Activated CD4-positive, alpha-beta memory T cell treated with anti-CD3 and anti-CD28 coated beads, Interleukin-2, amount 10 ng/mL, durations not matched to agents 7 days and 5 days (primary cell): ENCODE measurements at regions of chr3 and their contacts with region 1.

Region 1: DNA sequence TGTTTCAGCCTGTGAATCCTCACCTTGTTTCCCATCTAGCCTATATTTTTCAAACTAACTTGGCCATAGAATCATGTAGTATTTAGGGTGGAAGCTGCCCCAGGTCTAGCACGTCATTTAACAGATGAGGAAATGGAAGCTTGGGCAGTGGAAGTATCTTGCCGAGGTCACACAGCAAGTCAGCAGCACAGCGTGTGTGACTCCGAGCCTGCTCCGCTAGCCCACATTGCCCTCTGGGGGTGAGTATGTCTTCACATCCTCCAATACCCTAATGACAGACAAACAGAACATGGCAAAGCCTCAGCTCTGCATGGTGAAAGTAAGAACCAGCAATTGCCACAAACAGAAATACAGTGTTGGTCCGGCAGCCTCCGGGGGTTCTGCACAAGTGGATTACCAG is 2.2 kb upstream of the CCR5 start:
- DNase-seq: peak; percentile 86
- H3K4me3 Mint-ChIP-seq: peak overlapping the region; percentile 1
- H3K27ac Mint-ChIP-seq: peak overlapping the region; percentile 59
- H3K4me1 Mint-ChIP-seq: peaks cover 80% of the 10 kb centered on the region
- H3K27me3 Mint-ChIP-seq: peaks cover 10% of the 10 kb centered on the region

Region 2: DNA sequence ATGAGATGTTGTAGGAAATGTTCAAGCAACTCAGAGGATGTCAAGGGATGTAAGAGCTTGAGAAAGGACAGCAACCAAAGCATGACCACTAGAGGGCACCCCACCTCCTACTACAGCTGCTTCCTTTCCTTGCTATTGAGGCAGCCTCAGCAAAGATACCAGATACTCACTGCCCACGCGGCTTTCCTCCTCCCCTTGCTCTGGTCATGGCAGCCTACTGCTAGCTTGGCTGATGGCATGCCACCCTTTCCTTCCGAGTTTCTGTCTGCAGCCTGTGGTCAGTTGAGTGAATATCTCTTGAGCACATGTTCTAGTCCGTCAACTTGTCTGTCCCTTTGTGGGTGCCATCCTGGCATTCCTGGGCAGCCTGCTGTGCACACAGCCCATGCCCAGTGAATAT is 429.7 kb before region 1 on chr3:
- CTCF ChIA-PET with region 1: interaction called, 17 read pairs
- POLR2A ChIA-PET with region 1: interaction called, 46 read pairs
- DNase-seq: peak; percentile 89
- H3K4me3 Mint-ChIP-seq: no peak overlapping the region
- H3K27ac Mint-ChIP-seq: peak overlapping the region; percentile 2
- H3K4me1 Mint-ChIP-seq: peaks cover 52% of the 10 kb centered on the region
- H3K27me3 Mint-ChIP-seq: no peaks in the 10 kb centered on the region

Region 3: GRCh38 chr3:46013316-46014094 is 355.1 kb before region 1 on chr3:
- CTCF ChIA-PET with region 1: no interaction called
- POLR2A ChIA-PET with region 1: no interaction called
- DNase-seq: no peak
- H3K4me3 Mint-ChIP-seq: no peak overlapping the region
- H3K27ac Mint-ChIP-seq: no peak overlapping the region
- H3K4me1 Mint-ChIP-seq: peaks cover 21% of the 10 kb centered on the region
- H3K27me3 Mint-ChIP-seq: peaks cover 6% of the 10 kb centered on the region

Region 4: GRCh38 chr3:46078712-46079400 is 289.7 kb before region 1 on chr3:
- CTCF ChIA-PET with region 1: interaction called, 85 read pairs
- POLR2A ChIA-PET with region 1: interaction called, 8 read pairs
- DNase-seq: peak; percentile 91
- H3K4me3 Mint-ChIP-seq: no peak overlapping the region
- H3K27ac Mint-ChIP-seq: no peak overlapping the region
- H3K4me1 Mint-ChIP-seq: peaks cover 33% of the 10 kb centered on the region
- H3K27me3 Mint-ChIP-seq: peaks cover 27% of the 10 kb centered on the region

Region 5: DNA sequence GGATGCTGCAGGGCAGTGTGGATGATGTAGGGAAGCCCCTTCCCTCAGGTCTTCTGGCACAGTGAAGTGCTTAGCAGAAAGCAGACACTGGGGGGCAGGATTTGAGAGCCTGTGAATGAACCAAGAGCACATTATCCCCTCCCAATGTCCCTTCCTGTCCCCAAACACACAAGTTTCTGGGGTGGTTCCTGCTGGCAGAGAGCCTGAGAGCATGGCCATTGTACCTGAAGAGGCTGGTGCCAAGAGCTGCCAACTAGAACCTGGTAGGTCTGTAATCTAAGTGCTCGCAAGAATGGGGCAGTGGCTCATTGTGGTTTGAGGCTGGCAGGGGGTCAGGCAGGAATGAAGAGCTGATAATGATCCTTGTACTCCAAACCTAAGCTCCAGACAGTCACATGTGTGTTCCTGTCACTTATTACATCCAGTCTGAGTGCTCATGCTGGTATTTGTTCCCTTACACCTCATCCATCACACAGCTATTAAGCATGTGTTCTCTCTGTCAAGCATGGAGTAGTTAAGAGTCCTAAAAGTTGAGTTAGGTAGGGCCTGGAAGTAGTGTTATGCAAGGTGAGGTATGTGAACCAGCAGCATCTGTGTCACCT is 153.7 kb before region 1 on chr3:
- CTCF ChIA-PET with region 1: interaction called, 135 read pairs
- POLR2A ChIA-PET with region 1: interaction called, 101 read pairs
- DNase-seq: peak; percentile 43
- H3K4me3 Mint-ChIP-seq: no peak overlapping the region
- H3K27ac Mint-ChIP-seq: no peak overlapping the region
- H3K4me1 Mint-ChIP-seq: peaks cover 18% of the 10 kb centered on the region
- H3K27me3 Mint-ChIP-seq: peaks cover 20% of the 10 kb centered on the region

Region 6: DNA sequence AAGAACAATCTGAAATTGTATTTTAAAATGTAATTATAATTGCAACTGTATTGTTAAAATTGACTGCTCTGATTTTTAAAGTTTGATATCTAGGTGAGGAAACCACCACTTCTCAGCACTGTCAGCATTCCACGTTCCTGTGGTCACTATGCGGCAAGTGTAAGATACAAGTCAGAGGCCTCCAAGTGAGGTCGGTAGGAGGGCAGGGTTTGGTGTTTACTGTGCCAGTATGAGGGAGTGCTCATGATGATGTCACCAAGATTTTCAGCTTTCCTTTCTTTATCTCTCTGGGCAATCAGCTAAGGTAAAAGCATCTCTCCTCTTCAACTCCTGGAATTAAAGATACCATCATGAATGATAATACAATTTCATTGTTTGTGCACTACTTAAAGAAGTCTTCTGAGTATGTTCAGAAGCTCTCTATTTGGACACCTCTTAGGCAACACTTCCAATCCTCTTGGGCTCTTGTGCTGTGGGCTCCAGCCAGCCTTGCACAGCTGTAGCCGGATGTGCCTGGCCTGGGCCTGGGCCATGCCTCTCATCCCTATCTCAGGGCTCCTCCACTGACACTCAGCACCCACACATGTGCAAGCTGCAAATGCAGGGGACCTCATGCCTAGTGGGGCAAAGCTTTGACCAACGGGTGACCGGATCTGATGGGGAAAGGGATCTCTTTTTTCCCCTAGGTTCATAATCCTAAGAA is 83.4 kb before region 1 on chr3:
- CTCF ChIA-PET with region 1: interaction called, 74 read pairs
- POLR2A ChIA-PET with region 1: interaction called, 177 read pairs
- DNase-seq: peak; percentile 83
- H3K4me3 Mint-ChIP-seq: peak overlapping the region; percentile 6
- H3K27ac Mint-ChIP-seq: peak overlapping the region; percentile 92
- H3K4me1 Mint-ChIP-seq: peaks cover 91% of the 10 kb centered on the region
- H3K27me3 Mint-ChIP-seq: peaks cover 4% of the 10 kb centered on the region

Region 7: DNA sequence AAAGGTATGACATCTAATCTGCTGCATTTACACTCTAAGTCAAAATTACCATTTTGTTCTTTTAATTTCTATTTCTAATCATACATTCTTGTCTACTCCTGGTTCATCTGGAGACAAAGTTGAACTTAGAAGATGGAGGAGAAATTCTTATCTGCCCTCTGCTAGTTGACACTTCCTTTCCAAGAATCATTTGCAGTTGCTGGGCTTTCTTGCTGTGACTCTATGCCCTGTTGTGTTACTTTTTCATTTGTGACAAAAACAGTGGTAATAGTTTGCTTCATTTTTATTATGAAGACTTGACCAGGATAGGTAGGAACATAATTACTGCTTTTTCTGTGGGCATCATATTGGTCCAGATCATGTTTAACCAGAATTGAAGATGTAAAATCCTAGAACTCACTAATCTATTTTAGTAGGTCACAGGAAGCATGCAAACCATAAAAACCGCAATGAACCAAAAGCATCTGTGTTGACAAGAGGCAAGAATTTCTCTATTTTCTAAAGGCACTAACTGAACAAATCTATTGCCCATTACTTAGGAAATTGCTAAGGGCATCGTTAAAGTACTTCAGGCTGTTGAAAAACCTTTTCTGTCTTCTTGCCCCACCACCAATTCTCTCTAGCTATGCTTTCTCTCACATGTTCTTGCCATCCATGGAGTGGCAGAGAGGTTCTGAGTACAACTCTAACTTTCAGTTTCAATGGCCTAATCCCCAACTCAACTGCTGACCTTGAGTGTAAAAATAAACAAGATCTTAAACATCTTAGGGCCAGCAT is 18.9 kb before region 1 on chr3:
- CTCF ChIA-PET with region 1: interaction called, 130 read pairs
- POLR2A ChIA-PET with region 1: interaction called, 414 read pairs
- DNase-seq: no peak
- H3K4me3 Mint-ChIP-seq: peak overlapping the region; percentile 49
- H3K27ac Mint-ChIP-seq: peak overlapping the region; percentile 96
- H3K4me1 Mint-ChIP-seq: peaks cover 77% of the 10 kb centered on the region
- H3K27me3 Mint-ChIP-seq: peaks cover 15% of the 10 kb centered on the region